ENCODE measurements at regions of chr1 and their contacts with region 1.

Region 1: DNA sequence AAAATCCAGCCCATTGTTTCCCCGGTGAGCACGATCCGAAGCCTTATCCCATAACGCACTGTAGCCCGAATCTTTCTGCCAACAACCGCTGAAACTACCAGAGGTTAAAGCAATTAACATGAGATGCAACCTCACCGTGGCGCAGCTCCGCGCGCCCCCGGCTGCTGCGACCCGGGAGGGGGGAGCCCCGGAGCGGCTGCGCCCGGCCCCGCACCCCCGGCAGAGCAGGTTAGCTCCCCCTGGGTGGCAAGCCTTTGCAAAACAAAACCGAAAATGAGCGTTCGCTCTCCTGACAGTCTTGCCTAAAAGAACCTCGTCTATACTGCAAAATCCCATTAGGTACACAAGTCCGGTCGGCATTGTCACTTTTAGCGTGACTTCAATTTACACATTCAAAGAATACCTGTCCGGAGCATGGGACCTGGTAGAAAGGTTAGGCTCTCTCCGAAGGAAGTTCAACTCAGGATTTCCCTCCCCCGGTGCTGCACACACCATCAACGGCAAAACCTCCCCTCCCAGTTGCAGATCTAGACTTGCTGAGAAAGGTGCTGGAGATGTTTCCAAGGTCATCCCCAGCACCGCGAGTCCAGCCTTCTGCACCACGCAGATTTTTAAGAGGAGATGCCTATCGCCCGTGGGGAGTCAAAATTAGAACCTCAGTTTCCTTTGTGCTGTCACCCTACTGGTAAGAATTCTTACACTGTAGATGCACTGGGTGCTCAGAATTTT is 107.5 kb downstream of the ZNF281 start:
- DNase-seq: no peak
- ATAC-seq: peak; percentile 84
- H3K4me3 ChIP-seq: peak overlapping the region; percentile 53 to 73 (median 67)
- H3K27ac ChIP-seq: no peak overlapping the region
- H3K4me1 ChIP-seq: peaks cover 39% of the 10 kb centered on the region
- H3K27me3 ChIP-seq: peaks cover 0 to 14% of the 10 kb centered on the region in 2 experiments; a peak in 2 of 5 replicates
- CTCF ChIP-seq: peak; percentile 23; the same call in 1 of the 2 replicates
- EP300 ChIP-seq: no peak
- POLR2A ChIP-seq: no peak
- RAD21 ChIP-seq: peak; percentile 34; the same call in 1 of the 2 replicates

Region 2: GRCh38 chr1:200139661-200140250 is 162.6 kb before region 1 on chr1:
- CTCF ChIA-PET with region 1: no interaction called
- POLR2A ChIA-PET with region 1: no interaction called
- in situ Hi-C with region 1: no loop called
- intact Hi-C with region 1: loop called (anchors 10 kb)
- DNase-seq: peak; percentile 61
- ATAC-seq: peak; percentile 94
- H3K4me3 ChIP-seq: no peak overlapping the region
- H3K27ac ChIP-seq: no peak overlapping the region
- H3K4me1 ChIP-seq: no peaks in the 10 kb centered on the region
- H3K27me3 ChIP-seq: no peaks in the 10 kb centered on the region; a peak in 1 of 5 replicates
- CTCF ChIP-seq: peak; percentile 73
- EP300 ChIP-seq: no peak
- POLR2A ChIP-seq: no peak
- RAD21 ChIP-seq: 0 out of 2 replicates have a peak, but pooled peaks have one; percentile 17

Region 3: GRCh38 chr1:200258447-200259375 is 43.6 kb before region 1 on chr1:
- CTCF ChIA-PET with region 1: no interaction called
- POLR2A ChIA-PET with region 1: no interaction called
- in situ Hi-C with region 1: no loop called
- intact Hi-C with region 1: no loop called
- DNase-seq: peak; percentile 52
- ATAC-seq: peak; percentile 70
- H3K4me3 ChIP-seq: no peak overlapping the region
- H3K27ac ChIP-seq: no peak overlapping the region
- H3K4me1 ChIP-seq: peaks cover 46% of the 10 kb centered on the region
- H3K27me3 ChIP-seq: no peaks in the 10 kb centered on the region; a peak in 2 of 5 replicates
- CTCF ChIP-seq: peak; percentile 51
- EP300 ChIP-seq: no peak
- POLR2A ChIP-seq: no peak
- RAD21 ChIP-seq: 0 out of 2 replicates have a peak, but pooled peaks have one; percentile 21

Region 4: DNA sequence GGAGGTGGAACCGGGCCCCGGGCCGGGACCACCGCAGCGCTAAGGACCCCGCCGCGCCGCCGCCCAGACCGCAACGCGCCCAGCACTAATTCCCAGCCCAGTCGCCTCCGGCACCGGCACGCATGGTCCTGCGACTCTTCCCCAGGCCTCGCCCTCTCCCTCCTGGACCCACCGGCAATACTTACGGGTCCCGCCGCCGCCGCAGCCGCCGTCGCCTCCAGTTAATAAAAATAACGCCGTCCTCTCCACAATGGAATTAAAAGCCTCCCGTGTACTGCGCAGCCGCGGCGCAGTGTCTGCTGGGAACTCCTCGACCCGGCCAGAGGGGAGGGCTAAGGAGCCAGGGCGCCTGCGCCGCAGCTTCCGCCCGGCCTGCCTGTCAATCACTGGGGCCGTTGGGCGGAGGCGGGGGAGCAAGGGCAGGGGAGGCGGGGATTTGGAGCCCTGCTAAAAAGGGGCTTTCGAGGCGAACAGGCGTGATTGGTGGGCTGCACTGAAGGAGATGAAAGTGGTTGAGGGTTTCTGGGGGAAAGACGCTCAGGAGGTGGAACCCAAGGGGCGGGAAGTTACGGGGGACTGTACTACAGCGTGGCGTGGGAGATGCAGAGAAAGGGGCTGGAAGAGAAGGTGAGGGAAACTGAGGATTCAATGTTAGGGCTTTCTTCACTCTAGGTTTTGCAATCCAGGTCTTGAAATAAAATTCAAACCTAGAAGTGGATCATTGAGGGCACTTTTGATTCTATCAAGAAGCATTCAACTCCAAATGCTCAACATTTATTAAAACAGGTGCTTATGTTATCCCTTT is 107.6 kb after region 1 on chr1 and contains the start of gene ZNF281:
- CTCF ChIA-PET with region 1: no interaction called
- POLR2A ChIA-PET with region 1: no interaction called
- in situ Hi-C with region 1: no loop called
- intact Hi-C with region 1: loop called (anchors 5 kb)
- DNase-seq: peak; percentile 85
- ATAC-seq: peak; percentile 96
- H3K4me3 ChIP-seq: peak within 1 kb of the TSS; percentile 93 to 97 (median 93)
- H3K27ac ChIP-seq: peak within 1 kb of the TSS; percentile 77
- H3K4me1 ChIP-seq: peaks cover 81% of the 10 kb centered on the region
- H3K27me3 ChIP-seq: no peaks in the 10 kb centered on the region
- CTCF ChIP-seq: no peak
- EP300 ChIP-seq: no peak
- POLR2A ChIP-seq: peak; percentile 36 to 56
- RAD21 ChIP-seq: 0 out of 2 replicates have a peak, but pooled peaks have one; percentile 12
- total RNA-seq, gene ZNF281: 20.6 and 33.1 TPM in 2 replicates